Right ventricle myocardium inferior (tissue), 1 donor: ENCODE measurements at regions of chr14 and their contacts with region 1.

Region 1: DNA sequence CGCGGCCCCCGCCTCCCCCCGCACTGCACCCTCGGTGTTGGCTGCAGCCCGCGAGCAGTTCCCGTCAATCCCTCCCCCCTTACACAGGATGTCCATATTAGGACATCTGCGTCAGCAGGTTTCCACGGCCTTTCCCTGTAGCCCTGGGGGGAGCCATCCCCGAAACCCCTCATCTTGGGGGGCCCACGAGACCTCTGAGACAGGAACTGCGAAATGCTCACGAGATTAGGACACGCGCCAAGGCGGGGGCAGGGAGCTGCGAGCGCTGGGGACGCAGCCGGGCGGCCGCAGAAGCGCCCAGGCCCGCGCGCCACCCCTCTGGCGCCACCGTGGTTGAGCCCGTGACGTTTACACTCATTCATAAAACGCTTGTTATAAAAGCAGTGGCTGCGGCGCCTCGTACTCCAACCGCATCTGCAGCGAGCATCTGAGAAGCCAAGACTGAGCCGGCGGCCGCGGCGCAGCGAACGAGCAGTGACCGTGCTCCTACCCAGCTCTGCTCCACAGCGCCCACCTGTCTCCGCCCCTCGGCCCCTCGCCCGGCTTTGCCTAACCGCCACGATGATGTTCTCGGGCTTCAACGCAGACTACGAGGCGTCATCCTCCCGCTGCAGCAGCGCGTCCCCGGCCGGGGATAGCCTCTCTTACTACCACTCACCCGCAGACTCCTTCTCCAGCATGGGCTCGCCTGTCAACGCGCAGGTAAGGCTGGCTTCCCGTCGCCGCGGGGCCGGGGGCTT is at the start of gene FOS:
- DNase-seq: peak; percentile 97
- ATAC-seq: peak; percentile 87
- total RNA-seq, gene FOS: 9.5 TPM

Region 2: GRCh38 chr14:75176142-75176820 is 102.3 kb before region 1 on chr14 and contains the start of gene TMED10:
- intact Hi-C with region 1: loop called (anchors 5 kb)
- DNase-seq: peak; percentile 93
- ATAC-seq: peak; percentile 95
- total RNA-seq, gene TMED10: 280 TPM